SK-N-SH (cell line): ENCODE measurements at regions of chr9 and their contacts with region 1.

Region 1: GRCh38 chr9:37592108-37592951 is at the start of gene TOMM5:
- DNase-seq: peak; percentile 88
- H3K4me3 ChIP-seq: peak within 1 kb of the TSS; percentile 85 to 88
- H3K27ac ChIP-seq: peak within 1 kb of the TSS; percentile 85 to 88
- H3K4me1 ChIP-seq: peaks cover 9 to 14% of the 10 kb centered on the region in 2 experiments; a peak in 3 of 4 replicates
- H3K27me3 ChIP-seq: no peaks in the 10 kb centered on the region
- CTCF ChIP-seq: no peak
- EP300 ChIP-seq: no peak
- RAD21 ChIP-seq: no peak
- polyA plus RNA-seq, gene TOMM5: 215 and 255 TPM in 2 replicates

Region 2: DNA sequence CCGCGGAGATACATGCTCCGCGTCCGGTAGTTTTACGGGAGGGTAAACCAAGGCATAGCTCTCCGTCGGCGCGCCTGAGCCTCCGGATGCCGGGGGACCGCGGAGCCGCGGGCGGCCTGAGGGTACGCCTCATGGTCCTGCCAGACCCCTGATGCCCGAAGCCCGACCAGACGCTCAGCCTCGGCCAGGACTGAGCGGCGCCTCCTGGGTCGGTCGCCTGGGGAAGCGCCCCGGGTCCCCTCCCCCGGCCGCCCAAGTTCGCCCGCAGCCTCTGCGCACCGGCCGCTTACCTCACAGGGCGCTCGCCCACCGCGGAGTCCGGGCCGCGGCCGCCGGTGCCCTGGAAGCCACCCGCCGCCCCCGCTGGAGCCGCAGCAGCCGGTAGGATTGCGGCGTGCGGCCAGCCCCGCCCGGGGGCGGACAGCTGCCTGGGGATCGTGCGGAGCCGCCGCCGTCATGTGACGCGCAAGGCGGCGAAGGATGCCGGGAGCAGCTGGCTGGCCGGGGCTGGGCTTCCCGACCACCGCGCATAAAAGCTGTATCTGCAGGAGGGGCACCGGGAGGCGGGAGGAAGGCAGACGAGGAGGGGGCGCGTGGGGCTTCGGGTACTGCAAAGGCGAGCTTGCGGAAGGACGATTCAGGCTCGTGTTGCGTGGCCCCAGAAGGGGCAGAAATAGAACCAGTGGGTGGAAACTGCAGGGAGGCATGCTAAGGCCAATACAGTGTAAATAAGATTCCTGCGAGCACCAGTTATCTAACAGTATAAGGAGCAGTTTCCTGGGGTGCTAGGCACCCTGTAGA is 16.2 kb before region 1 on chr9 and contains the start of gene FBXO10:
- CTCF ChIA-PET with region 1: interaction called, 39 read pairs
- POLR2A ChIA-PET with region 1: interaction called, 20 read pairs
- DNase-seq: peak; percentile 91
- H3K4me3 ChIP-seq: peak within 1 kb of the TSS; percentile 72 to 83
- H3K27ac ChIP-seq: peak within 1 kb of the TSS; percentile 28 to 87; a peak in 3 of 4 replicates
- H3K4me1 ChIP-seq: peaks cover 12 to 15% of the 10 kb centered on the region in 2 experiments; a peak in 3 of 4 replicates
- H3K27me3 ChIP-seq: no peaks in the 10 kb centered on the region
- CTCF ChIP-seq: no peak
- EP300 ChIP-seq: no peak
- RAD21 ChIP-seq: no peak
- polyA plus RNA-seq, gene FBXO10: 10.1 and 12.8 TPM in 2 replicates

Region 3: GRCh38 chr9:37621273-37622121 is 29.2 kb after region 1 on chr9:
- CTCF ChIA-PET with region 1: interaction called, 15 read pairs
- POLR2A ChIA-PET with region 1: interaction called, 3 read pairs
- DNase-seq: no peak
- H3K4me3 ChIP-seq: no peak overlapping the region
- H3K27ac ChIP-seq: peak overlapping the region in 1 of 2 experiments; percentile 92; a peak in 2 of 4 replicates
- H3K4me1 ChIP-seq: peaks cover 0 to 23% of the 10 kb centered on the region in 2 experiments; a peak in 2 of 4 replicates
- H3K27me3 ChIP-seq: no peaks in the 10 kb centered on the region
- CTCF ChIP-seq: no peak
- EP300 ChIP-seq: no peak
- RAD21 ChIP-seq: no peak

Region 4: GRCh38 chr9:37784616-37785483 is 192.5 kb after region 1 on chr9 and contains the start of gene EXOSC3:
- CTCF ChIA-PET with region 1: interaction called, 5 read pairs
- POLR2A ChIA-PET with region 1: interaction called, 10 read pairs
- DNase-seq: peak; percentile 89
- H3K4me3 ChIP-seq: peak within 1 kb of the TSS; percentile 89 to 99
- H3K27ac ChIP-seq: peak within 1 kb of the TSS; percentile 51 to 85
- H3K4me1 ChIP-seq: peaks cover 5 to 13% of the 10 kb centered on the region in 2 experiments; a peak in 3 of 4 replicates
- H3K27me3 ChIP-seq: no peaks in the 10 kb centered on the region
- CTCF ChIP-seq: peak; percentile 31
- EP300 ChIP-seq: no peak
- RAD21 ChIP-seq: no peak
- polyA plus RNA-seq, gene EXOSC3: 44.0 and 53.6 TPM in 2 replicates